ENCODE measurements at regions of chr10 and their contacts with region 1.

Region 1: DNA sequence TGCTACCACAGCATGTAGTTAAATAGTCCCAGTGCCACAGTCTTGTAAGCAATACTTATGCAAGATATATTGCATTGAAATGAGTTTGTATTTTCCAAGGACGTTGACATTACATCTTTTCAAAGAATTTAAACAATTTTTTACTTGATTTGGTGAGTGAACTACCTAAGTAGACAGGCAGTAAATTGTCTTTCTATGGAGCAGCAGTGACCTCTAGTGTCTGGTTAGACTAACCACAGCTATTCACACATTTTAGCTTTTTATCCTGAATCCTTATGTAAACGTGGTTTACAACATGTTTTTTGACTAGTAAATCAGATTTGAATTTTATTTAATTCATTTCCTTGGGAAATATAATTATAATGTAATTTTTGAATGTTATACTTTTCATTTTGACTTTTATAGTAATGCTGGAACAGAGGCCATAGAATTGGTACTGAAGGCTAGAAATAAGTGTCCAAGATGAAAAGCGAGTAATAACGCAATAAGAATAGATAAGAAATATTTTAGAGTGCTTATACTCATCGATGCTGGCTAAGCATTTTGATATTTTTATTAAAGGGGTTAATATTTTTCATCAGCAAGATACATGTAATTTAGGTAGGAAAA is 5.6 kb downstream of the LRRTM3 start:
- DNase-seq: peak in 1 of 10 donors; percentile 34
- H3K4me3 ChIP-seq: peak overlapping the region; percentile 16 to 78 (median 65)
- H3K27ac ChIP-seq: peak overlapping the region in 58 of 59 donors; percentile 23 to 94 (median 85)
- H3K27me3 ChIP-seq: peaks cover 0 to 6% (median 0%) of the 10 kb centered on the region in 45 donors
- CTCF ChIP-seq: peak; percentile 73 to 93 (median 88)

Region 2: DNA sequence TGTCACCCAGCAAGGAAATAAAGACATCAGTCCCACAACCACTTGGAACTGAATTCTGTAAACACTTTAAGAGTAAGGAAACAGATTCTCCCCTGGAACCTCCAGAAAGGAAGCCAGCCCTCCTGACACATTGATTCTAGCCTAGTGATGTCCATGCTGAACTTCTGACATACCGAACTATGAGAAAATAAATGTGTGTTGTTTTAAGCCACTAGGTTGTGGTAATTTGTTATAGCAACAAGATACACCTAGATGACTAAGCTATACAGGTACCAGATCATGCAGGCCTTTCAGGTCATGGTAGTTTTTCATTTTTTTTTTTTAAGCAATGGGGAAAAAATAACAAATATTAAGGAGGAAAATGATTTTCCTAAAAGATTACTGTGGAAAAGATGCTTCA is 43.2 kb before region 1 on chr10:
- intact Hi-C with region 1: no loop called
- DNase-seq: no peak
- H3K4me3 ChIP-seq: no peak overlapping the region
- H3K27ac ChIP-seq: no peak overlapping the region
- H3K27me3 ChIP-seq: no peaks in the 10 kb centered on the region
- CTCF ChIP-seq: no peak

Region 3: DNA sequence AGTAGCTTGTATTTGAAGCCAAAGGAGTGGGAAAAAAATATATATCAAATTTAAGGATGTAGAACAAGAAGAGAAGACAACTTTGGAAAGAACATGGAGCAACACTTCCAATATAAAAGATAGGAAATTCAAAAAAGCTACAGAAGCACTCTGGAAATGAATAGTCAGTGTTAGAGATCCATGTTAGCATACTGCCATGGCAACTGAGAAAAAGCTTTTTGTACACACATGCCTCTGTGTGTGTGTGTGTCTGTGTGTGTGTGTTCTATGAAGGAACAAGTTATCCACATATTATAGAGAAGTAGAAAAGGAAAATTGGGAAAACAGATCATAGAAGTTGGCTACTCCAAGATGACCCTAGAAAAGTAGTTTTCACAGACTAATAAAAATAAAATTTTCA is 90.7 kb after region 1 on chr10:
- intact Hi-C with region 1: no loop called
- DNase-seq: no peak
- H3K4me3 ChIP-seq: no peak overlapping the region
- H3K27ac ChIP-seq: no peak overlapping the region
- H3K27me3 ChIP-seq: no peaks in the 10 kb centered on the region
- CTCF ChIP-seq: no peak

Region 4: DNA sequence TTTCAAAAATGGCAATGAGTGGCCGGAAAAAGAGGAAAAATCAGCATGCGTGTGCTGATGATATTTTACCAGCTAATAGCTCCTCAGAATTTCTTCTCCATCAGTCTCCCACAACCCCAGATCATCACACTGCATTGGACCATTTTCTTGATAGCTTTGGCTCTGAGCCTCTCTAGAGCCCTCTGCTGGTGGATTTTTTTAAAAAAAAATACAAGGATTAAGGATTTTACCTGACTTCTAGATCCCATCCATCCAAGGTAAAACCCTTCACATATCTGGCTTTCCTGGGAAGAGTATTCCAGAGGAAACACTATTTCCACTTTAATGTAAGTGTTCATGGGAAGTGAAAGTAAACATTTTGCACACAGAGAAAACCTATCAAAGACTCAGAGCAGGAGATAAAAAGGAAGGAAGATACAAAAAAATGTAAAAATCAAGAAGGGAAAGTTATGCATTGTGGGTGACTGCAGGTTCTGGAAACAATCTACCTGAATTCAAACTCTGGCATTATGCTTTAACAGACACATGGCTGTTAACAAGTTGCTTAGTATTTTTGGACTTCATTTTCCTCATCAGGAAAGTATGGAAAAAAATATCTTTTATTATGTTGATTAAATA is 375.3 kb after region 1 on chr10:
- intact Hi-C with region 1: loop called (anchors 5 to 10 kb)
- DNase-seq: no peak
- H3K4me3 ChIP-seq: no peak overlapping the region
- H3K27ac ChIP-seq: no peak overlapping the region
- H3K27me3 ChIP-seq: no peaks in the 10 kb centered on the region
- CTCF ChIP-seq: peak; percentile 25 to 74 (median 58)

Measured in dorsolateral prefrontal cortex (tissue), 120 donors.